IMR-90 (cell line): ENCODE measurements at regions of chr20 and their contacts with region 1.

Region 1: DNA sequence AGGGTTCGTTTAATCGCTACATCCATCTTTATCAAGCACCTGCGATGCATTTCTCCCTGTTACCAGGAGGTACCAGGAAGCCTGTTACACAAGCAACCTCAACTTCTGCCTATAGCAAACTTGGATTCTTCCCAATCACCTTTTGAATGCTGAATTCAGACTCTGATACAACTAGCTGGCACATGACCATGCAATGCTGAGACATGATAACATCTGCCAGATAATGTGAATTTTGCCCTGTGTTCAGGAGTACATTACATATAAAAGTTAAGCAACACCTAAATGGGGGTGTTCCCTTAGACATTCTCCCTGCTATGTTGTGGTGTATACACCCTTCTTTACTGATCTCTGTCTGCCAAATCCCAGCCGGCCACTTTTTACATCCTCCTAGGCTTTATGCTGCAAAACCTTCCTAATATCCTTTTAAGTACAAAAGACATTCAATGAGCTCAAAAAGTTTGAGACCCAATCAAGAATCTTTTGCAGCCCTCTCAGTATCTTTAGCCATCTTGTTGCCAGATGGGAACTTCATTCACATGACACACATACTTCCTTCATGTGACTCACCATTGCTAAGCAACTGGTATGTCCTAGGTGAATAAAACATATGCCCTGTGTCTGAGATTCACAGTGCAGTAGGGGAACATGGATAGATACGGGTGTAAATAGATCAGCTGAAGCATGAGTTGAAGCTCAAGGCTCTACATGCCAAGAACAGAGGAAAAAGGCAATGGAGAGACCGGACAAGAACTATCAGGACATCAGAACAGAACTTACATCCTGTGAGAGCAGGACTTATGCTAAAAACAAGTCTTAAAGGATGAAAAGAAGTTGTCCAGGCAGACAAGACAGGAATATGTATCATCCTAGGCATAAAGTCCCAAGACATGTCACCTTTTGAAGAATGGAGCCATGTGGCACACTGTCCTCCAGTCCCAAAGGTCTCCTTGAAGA is 84.3 kb downstream of the ZHX3 start:
- DNase-seq: peak; percentile 96
- ATAC-seq: peak; percentile 64
- H3K4me3 ChIP-seq: no peak overlapping the region
- H3K27ac ChIP-seq: peak overlapping the region; percentile 22; the same call in 1 of the 2 replicates
- H3K4me1 ChIP-seq: peaks cover 12% of the 10 kb centered on the region
- H3K27me3 ChIP-seq: no peaks in the 10 kb centered on the region
- CTCF ChIP-seq: no peak
- POLR2A ChIP-seq: no peak
- RAD21 ChIP-seq: no peak

Region 2: DNA sequence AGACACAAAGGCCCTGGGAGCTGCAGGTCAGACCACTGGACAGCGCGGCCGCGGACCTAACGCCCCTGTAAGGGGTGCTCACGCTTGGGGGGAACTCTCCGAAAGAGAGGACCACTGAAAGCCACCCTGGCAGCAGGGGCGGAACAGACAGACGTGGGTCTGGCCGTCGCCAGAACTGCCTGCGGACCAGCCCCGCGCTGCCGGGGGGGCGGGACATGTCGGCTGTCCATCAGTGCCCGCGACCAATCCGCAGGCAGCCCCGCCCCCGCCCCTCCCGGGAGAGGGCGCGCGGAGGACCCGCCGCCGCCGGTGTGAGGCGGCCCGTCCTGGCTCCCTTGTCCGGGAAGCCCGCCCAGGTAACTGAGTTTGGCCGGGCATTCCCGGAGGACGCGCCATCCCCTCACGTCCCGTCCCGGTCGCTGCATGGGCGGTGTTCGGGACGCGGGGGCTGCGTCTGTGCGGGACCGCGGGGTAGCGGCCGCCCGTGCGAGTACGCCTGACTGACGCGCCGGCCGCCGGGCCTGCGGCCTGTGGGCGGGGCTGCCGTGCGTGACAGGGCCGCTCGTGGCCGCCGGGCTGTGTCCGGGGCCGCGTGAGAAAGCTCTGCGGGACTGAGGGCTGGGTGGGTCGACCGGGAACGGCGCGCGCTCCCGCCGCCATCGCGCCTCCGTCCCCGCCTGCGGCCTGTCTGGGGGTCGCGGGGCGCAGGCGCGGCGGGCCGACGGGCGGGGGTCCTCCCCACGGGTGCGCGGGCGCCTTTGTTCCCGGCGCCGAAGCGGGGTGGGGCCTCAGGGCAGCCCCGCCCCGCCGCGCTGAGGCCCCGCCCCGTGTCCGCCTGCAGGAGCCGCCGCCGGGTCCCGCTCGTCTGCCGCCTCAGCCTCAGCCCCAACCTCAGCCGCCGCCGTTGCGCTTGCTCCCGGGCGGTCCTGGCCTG is 96.3 kb before region 1 on chr20 and contains the start of gene PLCG1:
- CTCF ChIA-PET with region 1: interaction called, 3 read pairs
- POLR2A ChIA-PET with region 1: no interaction called
- dilution Hi-C with region 1: no loop called
- in situ Hi-C with region 1: no loop called
- intact Hi-C with region 1: loop called (anchors 1 kb)
- DNase-seq: peak; percentile 67
- ATAC-seq: peak; percentile 84
- H3K4me3 ChIP-seq: peak within 1 kb of the TSS; percentile 98
- H3K27ac ChIP-seq: peak within 1 kb of the TSS; percentile 94
- H3K4me1 ChIP-seq: peaks cover 22% of the 10 kb centered on the region
- H3K27me3 ChIP-seq: no peaks in the 10 kb centered on the region
- CTCF ChIP-seq: no peak
- POLR2A ChIP-seq: peak; percentile 62
- RAD21 ChIP-seq: no peak
- total RNA-seq, gene PLCG1: 54.7 and 59.1 TPM in 2 replicates

Region 3: GRCh38 chr20:41317536-41318270 is 84.5 kb after region 1 on chr20 and contains the start of gene ZHX3:
- CTCF ChIA-PET with region 1: no interaction called
- POLR2A ChIA-PET with region 1: interaction called, 8 read pairs
- dilution Hi-C with region 1: no loop called
- in situ Hi-C with region 1: no loop called
- intact Hi-C with region 1: loop called (anchors 1 kb)
- DNase-seq: peak; percentile 94
- ATAC-seq: peak; percentile 94
- H3K4me3 ChIP-seq: peak within 1 kb of the TSS; percentile 55
- H3K27ac ChIP-seq: peak within 1 kb of the TSS; percentile 97
- H3K4me1 ChIP-seq: peaks cover 4% of the 10 kb centered on the region
- H3K27me3 ChIP-seq: no peaks in the 10 kb centered on the region
- CTCF ChIP-seq: no peak
- POLR2A ChIP-seq: no peak
- RAD21 ChIP-seq: no peak
- total RNA-seq, gene ZHX3: 28.0 and 28.3 TPM in 2 replicates

Region 4: DNA sequence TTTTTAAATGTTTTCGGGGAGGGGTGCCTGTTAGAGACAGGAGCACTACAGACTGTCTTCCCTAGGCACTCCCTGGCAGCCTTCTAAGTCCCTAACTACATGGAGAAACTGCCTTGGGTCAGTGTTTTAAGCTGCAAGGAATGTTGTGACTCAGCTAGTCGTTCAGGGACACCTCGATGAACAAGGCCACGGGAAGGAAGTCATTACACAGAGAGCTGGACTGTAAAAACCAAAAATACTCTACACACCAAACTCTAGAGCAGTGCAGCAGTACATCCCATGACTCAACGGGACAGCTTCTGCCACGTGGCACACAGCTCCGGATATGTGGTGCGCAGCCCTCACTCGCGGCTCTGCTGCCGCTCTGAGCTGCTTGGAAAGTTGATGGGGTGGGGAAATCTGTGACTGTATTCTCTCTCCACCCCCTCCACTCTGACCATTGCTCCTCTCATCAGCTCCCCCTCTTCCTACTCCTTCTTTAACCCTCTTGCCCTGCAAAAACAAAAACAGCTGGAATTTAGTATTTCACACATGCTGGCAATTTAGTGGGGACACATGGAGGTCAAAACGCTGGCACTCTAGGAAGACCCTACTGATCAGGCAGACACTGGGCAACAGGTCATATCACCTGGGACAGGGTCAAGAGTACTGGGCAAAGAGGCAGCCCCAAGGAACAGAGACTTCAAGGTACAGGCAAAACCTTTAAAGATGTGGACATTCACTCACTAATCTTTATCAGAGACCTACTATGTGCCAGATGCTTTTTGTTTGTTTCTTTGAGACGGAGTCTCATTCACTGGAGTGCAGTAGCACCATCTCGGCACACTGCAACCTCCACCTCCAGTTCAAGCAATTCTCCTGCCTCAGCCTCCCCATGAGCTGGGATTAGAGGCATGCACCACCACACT is 96.4 kb after region 1 on chr20:
- CTCF ChIA-PET with region 1: no interaction called
- POLR2A ChIA-PET with region 1: no interaction called
- dilution Hi-C with region 1: no loop called
- in situ Hi-C with region 1: loop called (anchors 5 kb)
- intact Hi-C with region 1: no loop called
- DNase-seq: peak; percentile 99
- ATAC-seq: peak; percentile 92
- H3K4me3 ChIP-seq: no peak overlapping the region
- H3K27ac ChIP-seq: peak overlapping the region; percentile 91
- H3K4me1 ChIP-seq: peaks cover 21% of the 10 kb centered on the region
- H3K27me3 ChIP-seq: no peaks in the 10 kb centered on the region
- CTCF ChIP-seq: no peak
- POLR2A ChIP-seq: peak; percentile 72; the same call in 1 of the 2 replicates
- RAD21 ChIP-seq: peak; percentile 37; the same call in 1 of the 2 replicates

Region 5: GRCh38 chr20:41339507-41340326 is 106.5 kb after region 1 on chr20:
- CTCF ChIA-PET with region 1: interaction called, 11 read pairs
- POLR2A ChIA-PET with region 1: no interaction called
- dilution Hi-C with region 1: no loop called
- in situ Hi-C with region 1: loop called (anchors 5 kb)
- intact Hi-C with region 1: loop called (anchors 1 kb)
- DNase-seq: peak; percentile 45
- ATAC-seq: peak; percentile 88
- H3K4me3 ChIP-seq: peak overlapping the region; percentile 11; the same call in 1 of the 2 replicates
- H3K27ac ChIP-seq: no peak overlapping the region
- H3K4me1 ChIP-seq: peaks cover 16% of the 10 kb centered on the region
- H3K27me3 ChIP-seq: no peaks in the 10 kb centered on the region
- CTCF ChIP-seq: peak; percentile 88
- POLR2A ChIP-seq: no peak
- RAD21 ChIP-seq: peak; percentile 98

Region 6: GRCh38 chr20:41411391-41411847 is 178.2 kb after region 1 on chr20:
- CTCF ChIA-PET with region 1: no interaction called
- POLR2A ChIA-PET with region 1: no interaction called
- dilution Hi-C with region 1: no loop called
- in situ Hi-C with region 1: no loop called
- intact Hi-C with region 1: loop called (anchors 10 kb)
- DNase-seq: peak; percentile 28
- ATAC-seq: peak; percentile 51
- H3K4me3 ChIP-seq: no peak overlapping the region
- H3K27ac ChIP-seq: no peak overlapping the region
- H3K4me1 ChIP-seq: no peaks in the 10 kb centered on the region
- H3K27me3 ChIP-seq: no peaks in the 10 kb centered on the region
- CTCF ChIP-seq: peak; percentile 45
- POLR2A ChIP-seq: no peak
- RAD21 ChIP-seq: peak; percentile 57